Sigmoid colon (tissue), 7 donors: ENCODE measurements at regions of chr1 and their contacts with region 1.

Region 1: DNA sequence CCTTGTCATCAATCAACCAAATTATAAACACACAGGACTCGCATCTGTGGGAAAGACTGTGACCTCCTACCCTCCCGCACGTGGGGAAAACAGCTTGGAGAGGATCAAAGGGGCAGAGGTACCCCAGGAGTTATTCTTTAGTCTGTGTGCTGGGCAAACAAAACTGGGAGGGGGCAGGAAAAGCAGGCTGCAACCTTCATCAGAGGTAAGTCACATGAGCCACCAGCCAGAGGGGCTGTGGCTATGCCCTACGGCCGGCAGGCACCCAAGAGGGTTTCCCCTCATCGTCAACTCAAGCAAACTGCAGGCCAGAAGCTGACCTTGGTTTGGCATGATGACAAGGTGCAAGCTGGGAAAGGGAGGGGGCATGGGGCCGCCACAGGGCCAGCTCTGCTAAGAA is 12.5 kb downstream of the SMIM12 start:
- DNase-seq: peak; percentile 24
- H3K4me3 ChIP-seq: no peak overlapping the region
- H3K27ac ChIP-seq: no peak overlapping the region
- H3K4me1 ChIP-seq: peaks cover 0 to 6% (median 3%) of the 10 kb centered on the region in 4 donors
- H3K27me3 ChIP-seq: no peaks in the 10 kb centered on the region
- CTCF ChIP-seq: no peak
- EP300 ChIP-seq: no peak
- POLR2A ChIP-seq: no peak

Region 2: GRCh38 chr1:34874296-34874952 is 27.3 kb after region 1 on chr1:
- intact Hi-C with region 1: loop called (anchors 2 kb)
- DNase-seq: no peak
- H3K4me3 ChIP-seq: no peak overlapping the region
- H3K27ac ChIP-seq: no peak overlapping the region
- H3K4me1 ChIP-seq: no peaks in the 10 kb centered on the region
- H3K27me3 ChIP-seq: peaks cover 0 to 51% (median 0%) of the 10 kb centered on the region in 3 donors
- CTCF ChIP-seq: no peak
- EP300 ChIP-seq: no peak
- POLR2A ChIP-seq: no peak